Sigmoid colon (tissue), 7 donors: ENCODE measurements at regions of chr1 and their contacts with region 1.

Region 1: GRCh38 chr1:9942939-9943788 is at the starts of genes LZIC and NMNAT1:
- DNase-seq: peak; percentile 97
- H3K4me3 ChIP-seq: peak within 1 kb of the TSS; percentile 65 to 75 (median 72)
- H3K27ac ChIP-seq: peak within 1 kb of the TSS; percentile 87 to 91 (median 88)
- H3K4me1 ChIP-seq: peaks cover 0 to 22% (median 20%) of the 10 kb centered on the region in 4 donors
- H3K27me3 ChIP-seq: no peaks in the 10 kb centered on the region
- CTCF ChIP-seq: no peak
- EP300 ChIP-seq: no peak
- POLR2A ChIP-seq: peak; percentile 88 to 92
- total RNA-seq, gene LZIC: 25.1 to 29.6 (median 27.3) TPM
- total RNA-seq, gene NMNAT1: 5.1 to 9.7 (median 6.7) TPM

Region 2: DNA sequence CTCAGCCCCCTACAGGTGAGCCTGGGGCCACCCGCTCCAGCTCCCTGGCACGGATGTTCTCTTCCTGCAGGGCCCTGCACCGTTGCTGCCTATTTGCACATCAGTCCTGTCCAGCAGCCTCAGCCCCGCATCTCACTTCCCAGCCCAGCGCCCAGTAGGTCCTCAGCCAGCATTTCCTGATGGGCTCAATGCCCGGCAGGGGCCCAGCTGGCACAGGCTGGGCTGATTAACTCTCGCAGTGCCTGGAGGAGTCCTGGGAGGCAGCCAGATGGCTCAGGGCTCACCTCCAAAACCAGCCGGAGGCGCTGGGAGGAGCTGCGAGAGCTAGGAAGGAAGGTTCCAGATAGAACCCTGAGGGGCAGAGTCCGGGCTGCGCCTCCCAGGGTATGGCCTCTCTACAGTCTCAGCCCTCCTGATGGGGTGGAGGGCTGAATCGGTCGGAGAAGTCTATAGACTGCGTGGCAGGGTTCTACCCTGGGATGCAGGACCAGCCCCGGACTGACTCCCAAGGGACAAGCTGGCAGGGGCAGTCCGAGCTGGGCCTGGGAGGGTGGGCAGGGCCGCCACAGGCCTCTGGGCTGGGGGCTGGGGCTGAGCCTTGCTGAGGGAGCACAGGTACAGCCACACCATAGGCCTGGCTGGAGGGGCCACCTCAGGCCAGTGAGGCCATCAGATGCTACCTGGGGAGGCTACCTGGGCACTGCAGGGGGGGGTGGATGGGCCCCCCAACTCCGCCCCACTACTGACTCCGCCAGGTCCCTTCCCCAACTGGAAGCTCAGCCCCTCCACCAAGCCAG is 100.2 kb before region 1 on chr1:
- intact Hi-C with region 1: no loop called
- DNase-seq: no peak
- H3K4me3 ChIP-seq: no peak overlapping the region
- H3K27ac ChIP-seq: peak overlapping the region in 1 of 4 donors; percentile 59
- H3K4me1 ChIP-seq: peaks cover 0 to 11% (median 7%) of the 10 kb centered on the region in 4 donors
- H3K27me3 ChIP-seq: no peaks in the 10 kb centered on the region
- CTCF ChIP-seq: no peak
- EP300 ChIP-seq: no peak
- POLR2A ChIP-seq: no peak

Region 3: DNA sequence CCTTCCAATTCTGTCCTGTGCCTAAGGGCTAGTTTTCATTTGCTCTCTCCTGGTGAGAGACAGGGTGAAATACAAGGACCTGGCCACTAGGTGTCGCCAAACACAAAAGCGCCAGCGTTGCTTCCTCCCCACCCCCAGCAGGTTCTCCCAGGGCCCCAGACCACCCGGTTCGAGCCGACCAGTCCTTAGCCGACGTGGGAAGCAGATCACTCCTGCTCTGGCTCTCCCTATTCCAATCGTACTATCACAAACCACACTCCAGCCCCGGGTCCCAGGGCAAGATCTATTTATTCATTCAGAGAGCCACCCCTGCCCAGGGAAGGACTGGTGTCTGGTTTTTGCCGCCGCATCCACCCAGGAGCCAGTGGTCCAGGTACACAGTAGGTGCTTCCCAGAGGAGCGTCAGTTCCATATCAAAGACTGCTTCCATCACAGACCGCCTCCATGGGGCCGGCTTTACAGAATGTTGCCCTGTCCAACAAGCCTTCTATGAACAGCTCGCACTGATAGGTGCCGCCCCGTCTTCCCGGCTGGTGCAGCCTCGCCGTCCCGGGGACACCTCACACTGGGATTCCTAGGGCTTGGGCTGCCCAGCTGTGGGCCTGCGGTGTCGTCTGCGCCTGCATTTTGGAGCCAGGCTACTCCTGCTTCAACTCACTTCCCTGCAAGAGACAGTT is 68.1 kb before region 1 on chr1:
- intact Hi-C with region 1: loop called (anchors 1 kb)
- DNase-seq: peak; percentile 83
- H3K4me3 ChIP-seq: peak overlapping the region in 3 of 4 donors; percentile 6 to 39 (median 33)
- H3K27ac ChIP-seq: peak overlapping the region; percentile 19 to 64 (median 56)
- H3K4me1 ChIP-seq: peaks cover 0 to 17% (median 9%) of the 10 kb centered on the region in 4 donors
- H3K27me3 ChIP-seq: no peaks in the 10 kb centered on the region
- CTCF ChIP-seq: peak; percentile 78 to 95 (median 92)
- EP300 ChIP-seq: no peak
- POLR2A ChIP-seq: no peak

Region 4: GRCh38 chr1:9910425-9911178 is 32.6 kb before region 1 on chr1:
- intact Hi-C with region 1: loop called (anchors 2 kb)
- DNase-seq: peak; percentile 100
- H3K4me3 ChIP-seq: peak overlapping the region; percentile 45 to 62 (median 60)
- H3K27ac ChIP-seq: peak overlapping the region; percentile 93 to 98 (median 97)
- H3K4me1 ChIP-seq: peaks cover 0 to 22% (median 19%) of the 10 kb centered on the region in 4 donors
- H3K27me3 ChIP-seq: no peaks in the 10 kb centered on the region
- CTCF ChIP-seq: no peak
- EP300 ChIP-seq: no peak
- POLR2A ChIP-seq: peak; percentile 91 to 95

Region 5: DNA sequence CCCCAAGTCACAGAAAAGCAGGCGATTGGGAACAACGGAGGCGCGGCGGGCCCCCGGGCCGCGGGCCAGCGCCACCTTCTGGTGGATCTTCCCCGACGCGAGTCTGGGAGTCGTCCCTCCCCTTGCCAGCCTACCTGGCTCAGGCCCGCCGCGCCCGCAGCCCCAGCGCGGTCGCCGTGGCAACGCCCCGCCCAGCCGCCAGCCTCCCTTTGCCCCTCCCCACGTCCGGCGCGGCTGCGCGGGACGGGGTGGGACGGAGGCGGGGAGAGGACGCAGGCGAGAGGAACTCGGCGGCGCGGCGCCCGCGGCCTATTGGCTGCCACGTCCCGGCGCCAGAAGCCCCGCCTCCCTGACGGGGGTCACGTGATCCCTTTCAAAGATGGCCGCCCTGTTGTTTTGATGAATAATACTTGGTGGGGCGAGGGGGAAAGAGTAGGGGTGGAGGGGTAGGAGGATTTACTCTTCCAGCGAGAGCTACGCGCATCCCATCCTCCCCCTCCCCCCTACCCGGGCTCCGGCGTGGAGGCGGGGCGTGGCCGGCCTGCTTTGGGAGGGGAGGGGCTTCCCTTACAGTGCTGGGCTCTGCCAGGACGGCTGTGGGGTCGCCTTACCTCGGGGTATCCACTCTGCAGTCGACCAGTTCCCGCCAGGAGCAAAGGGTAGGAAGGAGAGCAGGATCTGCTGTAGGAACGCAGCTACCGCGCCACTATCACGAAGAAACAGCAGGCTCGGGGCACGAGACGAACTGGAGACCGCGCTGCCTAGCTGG is 89.6 kb after region 1 on chr1 and contains the start of gene UBE4B:
- intact Hi-C with region 1: loop called (anchors 5 kb)
- DNase-seq: peak; percentile 98
- H3K4me3 ChIP-seq: peak within 1 kb of the TSS; percentile 95 to 97 (median 96)
- H3K27ac ChIP-seq: peak within 1 kb of the TSS; percentile 91 to 98 (median 96)
- H3K4me1 ChIP-seq: peaks cover 0 to 28% (median 21%) of the 10 kb centered on the region in 4 donors
- H3K27me3 ChIP-seq: no peaks in the 10 kb centered on the region
- CTCF ChIP-seq: peak in 3 of 4 experiments; percentile 58 to 75 (median 69)
- EP300 ChIP-seq: no peak
- POLR2A ChIP-seq: peak in 1 of 2 donors; percentile 33
- total RNA-seq, gene UBE4B: 47.8 to 124 (median 59.4) TPM

Region 6: GRCh38 chr1:10152709-10153284 is 209.6 kb after region 1 on chr1:
- intact Hi-C with region 1: loop called (anchors 10 kb)
- DNase-seq: no peak
- H3K4me3 ChIP-seq: no peak overlapping the region
- H3K27ac ChIP-seq: no peak overlapping the region
- H3K4me1 ChIP-seq: peaks cover 0 to 15% (median 5%) of the 10 kb centered on the region in 4 donors
- H3K27me3 ChIP-seq: no peaks in the 10 kb centered on the region
- CTCF ChIP-seq: peak in 3 of 4 experiments; percentile 47 to 51 (median 50)
- EP300 ChIP-seq: no peak
- POLR2A ChIP-seq: no peak

Region 7: GRCh38 chr1:10338047-10338446 is 394.9 kb after region 1 on chr1:
- intact Hi-C with region 1: loop called (anchors 10 kb)
- DNase-seq: peak; percentile 69
- H3K4me3 ChIP-seq: no peak overlapping the region
- H3K27ac ChIP-seq: no peak overlapping the region
- H3K4me1 ChIP-seq: no peaks in the 10 kb centered on the region
- H3K27me3 ChIP-seq: no peaks in the 10 kb centered on the region
- CTCF ChIP-seq: peak; percentile 24 to 72 (median 54)
- EP300 ChIP-seq: no peak
- POLR2A ChIP-seq: no peak

Region 8: GRCh38 chr1:10430216-10431069 is 487.3 kb after region 1 on chr1 and contains the start of gene CENPS:
- intact Hi-C with region 1: loop called (anchors 10 kb)
- DNase-seq: peak; percentile 96
- H3K4me3 ChIP-seq: peak within 1 kb of the TSS; percentile 58 to 69 (median 60)
- H3K27ac ChIP-seq: peak within 1 kb of the TSS; percentile 71 to 83 (median 78)
- H3K4me1 ChIP-seq: peaks cover 0 to 19% (median 16%) of the 10 kb centered on the region in 4 donors
- H3K27me3 ChIP-seq: no peaks in the 10 kb centered on the region
- CTCF ChIP-seq: peak; percentile 84 to 97 (median 96)
- EP300 ChIP-seq: no peak
- POLR2A ChIP-seq: no peak
- total RNA-seq, gene CENPS: 2.8 to 15.0 (median 10.7) TPM